Heart right ventricle (tissue), 16 donors: ENCODE measurements at regions of chr3 and their contacts with region 1.

Region 1: GRCh38 chr3:148319960-148320359 is 377.7 kb upstream of the AGTR1 start:
- DNase-seq: no peak
- ATAC-seq: no peak
- H3K4me3 ChIP-seq: no peak overlapping the region
- H3K27ac ChIP-seq: no peak overlapping the region
- H3K4me1 ChIP-seq: peaks cover 0 to 9% (median 0%) of the 10 kb centered on the region in 9 donors
- H3K27me3 ChIP-seq: no peaks in the 10 kb centered on the region
- CTCF ChIP-seq: no peak

Region 2: DNA sequence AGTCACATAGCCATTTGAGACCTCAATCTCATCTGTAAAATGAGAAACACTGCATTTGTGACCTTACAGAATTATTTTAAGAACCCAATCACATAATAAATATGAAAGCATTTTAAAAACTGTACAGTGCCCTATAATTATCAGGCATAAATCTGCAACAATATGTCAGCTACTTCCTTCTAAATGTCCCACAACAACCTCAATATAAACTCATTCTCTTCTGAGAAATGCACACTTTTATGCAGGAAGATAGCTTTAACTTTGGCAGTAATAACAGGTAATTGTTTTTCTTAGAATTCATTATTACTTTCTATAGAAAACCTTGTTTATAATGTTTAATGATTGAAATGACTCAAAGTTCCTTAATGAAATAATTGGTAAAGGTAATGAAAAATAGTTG is 22.9 kb before region 1 on chr3:
- intact Hi-C with region 1: loop called in 1 of 10 experiments (anchors 2 kb)
- DNase-seq: no peak
- ATAC-seq: no peak
- H3K4me3 ChIP-seq: no peak overlapping the region
- H3K27ac ChIP-seq: no peak overlapping the region
- H3K4me1 ChIP-seq: no peaks in the 10 kb centered on the region
- H3K27me3 ChIP-seq: no peaks in the 10 kb centered on the region
- CTCF ChIP-seq: no peak